Activated B cell treated with CpG ODN at 0.5 μM for 24 hours (primary cell): ENCODE measurements at regions of chr14 and their contacts with region 1.

Region 1: DNA sequence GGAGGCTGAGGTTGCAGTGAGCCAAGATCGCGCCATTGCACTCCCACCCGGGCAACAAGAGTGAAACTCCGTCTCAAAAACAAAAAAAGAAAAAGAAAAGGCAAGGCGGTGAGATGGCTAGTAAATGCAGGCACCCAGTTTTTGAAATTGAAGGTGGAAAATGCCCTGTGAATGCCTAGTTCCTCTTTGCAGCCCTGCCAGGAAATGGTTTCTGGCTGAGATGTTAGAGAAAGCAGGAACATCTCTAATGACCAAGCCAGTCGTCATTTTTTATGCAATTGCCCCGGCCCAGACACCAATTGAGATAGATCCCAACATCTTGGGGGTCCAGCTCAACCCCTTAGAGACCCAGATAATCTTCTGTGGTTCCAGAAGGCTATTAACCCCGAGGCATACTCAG is 17.0 kb downstream of the SLC8A3 start:
- DNase-seq: no peak
- ATAC-seq: no peak
- H3K4me3 Mint-ChIP-seq: no peak overlapping the region
- H3K27ac Mint-ChIP-seq: no peak overlapping the region
- H3K4me1 Mint-ChIP-seq: peaks cover 4% of the 10 kb centered on the region
- H3K27me3 Mint-ChIP-seq: peaks cover 5% of the 10 kb centered on the region
- CTCF ChIP-seq: no peak

Region 2: DNA sequence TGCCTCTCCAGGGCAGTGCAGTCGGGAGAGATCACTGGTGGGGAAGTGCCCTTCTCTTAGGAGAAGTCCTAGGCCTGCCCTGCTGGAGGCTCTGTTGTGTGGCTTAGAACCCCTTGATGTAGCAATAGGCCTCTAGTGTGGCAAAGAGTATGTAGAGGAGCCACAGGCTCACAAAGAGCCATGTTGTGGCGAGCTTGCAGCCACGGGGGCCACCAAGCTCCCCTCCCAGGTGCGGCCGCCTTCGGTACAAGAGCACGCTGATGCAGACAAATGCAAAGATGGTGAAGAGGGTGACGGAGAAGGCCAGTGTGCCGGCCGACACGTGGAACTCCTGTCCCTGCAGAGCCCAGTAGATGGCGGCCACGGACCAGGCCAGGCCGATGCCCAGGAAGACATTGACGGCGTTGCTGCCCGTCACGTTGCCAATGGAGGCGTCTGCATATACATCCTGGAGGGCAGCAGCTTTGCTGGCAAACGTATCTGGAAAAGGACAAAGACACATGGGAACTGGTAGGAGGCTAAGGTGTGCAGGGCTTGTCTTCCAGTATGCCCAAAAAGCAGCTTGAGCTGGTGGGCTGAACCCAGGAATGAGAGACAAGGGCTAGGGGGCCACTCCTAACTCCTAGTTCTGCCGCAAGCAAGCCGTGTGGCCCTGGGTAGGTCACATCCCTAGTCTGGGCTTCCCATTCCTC is 125.7 kb before region 1 on chr14:
- CTCF ChIA-PET with region 1: no interaction called
- POLR2A ChIA-PET with region 1: no interaction called
- intact Hi-C with region 1: no loop called
- DNase-seq: no peak
- ATAC-seq: no peak
- H3K4me3 Mint-ChIP-seq: no peak overlapping the region
- H3K27ac Mint-ChIP-seq: no peak overlapping the region
- H3K4me1 Mint-ChIP-seq: no peaks in the 10 kb centered on the region
- H3K27me3 Mint-ChIP-seq: peaks cover 10% of the 10 kb centered on the region
- CTCF ChIP-seq: no peak

Region 3: DNA sequence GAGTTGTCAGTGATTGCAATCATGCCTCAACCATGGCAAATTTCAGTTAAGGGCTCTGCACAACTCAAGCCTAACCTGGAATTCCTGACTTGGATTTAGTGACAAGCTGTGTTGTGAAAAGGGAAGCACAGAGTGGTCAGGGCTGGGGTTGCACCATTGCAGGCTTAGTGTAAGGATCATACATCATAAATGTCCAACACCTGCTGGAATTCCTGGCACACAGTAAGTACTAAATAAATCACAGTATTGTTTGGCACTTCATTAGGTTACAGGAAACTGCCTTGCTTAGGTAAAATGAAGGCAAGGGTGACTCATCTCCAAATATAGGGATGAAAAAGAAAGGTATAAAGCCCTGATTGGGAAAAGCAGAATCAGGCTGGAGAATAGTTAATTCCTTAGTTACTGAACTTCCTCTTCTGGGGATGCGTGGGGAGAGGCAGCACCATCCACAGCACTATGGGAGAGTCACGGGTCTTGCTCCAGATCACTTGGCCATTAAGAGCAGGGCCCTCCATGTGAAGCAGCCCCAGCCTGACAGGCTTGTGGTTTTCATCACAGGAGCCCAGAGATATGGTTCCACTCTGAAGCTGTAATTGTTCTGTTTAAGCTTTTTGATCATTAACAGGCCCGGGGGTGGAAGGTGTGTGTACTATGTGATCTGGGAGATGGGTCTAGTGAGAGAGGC is 22.7 kb before region 1 on chr14:
- CTCF ChIA-PET with region 1: no interaction called
- POLR2A ChIA-PET with region 1: no interaction called
- intact Hi-C with region 1: loop called (anchors 2 kb)
- DNase-seq: no peak
- ATAC-seq: no peak
- H3K4me3 Mint-ChIP-seq: no peak overlapping the region
- H3K27ac Mint-ChIP-seq: no peak overlapping the region
- H3K4me1 Mint-ChIP-seq: no peaks in the 10 kb centered on the region
- H3K27me3 Mint-ChIP-seq: no peaks in the 10 kb centered on the region
- CTCF ChIP-seq: no peak